WTC11 (cell line): ENCODE measurements at regions of chr21 and their contacts with region 1.

Region 1: GRCh38 chr21:31088315-31088714 is 50.0 kb upstream of the KRTAP19-8 start:
- DNase-seq: peak; percentile 48
- ATAC-seq: peak; percentile 39; the same call in 1 of the 2 replicates
- H3K4me3 Mint-ChIP-seq: no peak overlapping the region
- H3K27ac Mint-ChIP-seq: no peak overlapping the region
- H3K4me1 Mint-ChIP-seq: peaks cover 6% of the 10 kb centered on the region
- H3K27me3 Mint-ChIP-seq: no peaks in the 10 kb centered on the region
- CTCF ChIP-seq: peak; percentile 32; the same call in 1 of the 2 replicates

Region 2: GRCh38 chr21:30831194-30831765 is 257.0 kb before region 1 on chr21:
- CTCF ChIA-PET with region 1: interaction called, 14 read pairs
- POLR2A ChIA-PET with region 1: no interaction called
- DNase-seq: peak; percentile 72
- ATAC-seq: peak; percentile 81
- H3K4me3 Mint-ChIP-seq: no peak overlapping the region
- H3K27ac Mint-ChIP-seq: no peak overlapping the region
- H3K4me1 Mint-ChIP-seq: no peaks in the 10 kb centered on the region
- H3K27me3 Mint-ChIP-seq: no peaks in the 10 kb centered on the region
- CTCF ChIP-seq: peak; percentile 86

Region 3: GRCh38 chr21:30839304-30839703 is 249.0 kb before region 1 on chr21:
- CTCF ChIA-PET with region 1: interaction called, 22 read pairs
- POLR2A ChIA-PET with region 1: no interaction called
- DNase-seq: peak; percentile 73
- ATAC-seq: peak; percentile 98
- H3K4me3 Mint-ChIP-seq: no peak overlapping the region
- H3K27ac Mint-ChIP-seq: no peak overlapping the region
- H3K4me1 Mint-ChIP-seq: no peaks in the 10 kb centered on the region
- H3K27me3 Mint-ChIP-seq: no peaks in the 10 kb centered on the region
- CTCF ChIP-seq: peak; percentile 44; the same call in 1 of the 2 replicates

Region 4: DNA sequence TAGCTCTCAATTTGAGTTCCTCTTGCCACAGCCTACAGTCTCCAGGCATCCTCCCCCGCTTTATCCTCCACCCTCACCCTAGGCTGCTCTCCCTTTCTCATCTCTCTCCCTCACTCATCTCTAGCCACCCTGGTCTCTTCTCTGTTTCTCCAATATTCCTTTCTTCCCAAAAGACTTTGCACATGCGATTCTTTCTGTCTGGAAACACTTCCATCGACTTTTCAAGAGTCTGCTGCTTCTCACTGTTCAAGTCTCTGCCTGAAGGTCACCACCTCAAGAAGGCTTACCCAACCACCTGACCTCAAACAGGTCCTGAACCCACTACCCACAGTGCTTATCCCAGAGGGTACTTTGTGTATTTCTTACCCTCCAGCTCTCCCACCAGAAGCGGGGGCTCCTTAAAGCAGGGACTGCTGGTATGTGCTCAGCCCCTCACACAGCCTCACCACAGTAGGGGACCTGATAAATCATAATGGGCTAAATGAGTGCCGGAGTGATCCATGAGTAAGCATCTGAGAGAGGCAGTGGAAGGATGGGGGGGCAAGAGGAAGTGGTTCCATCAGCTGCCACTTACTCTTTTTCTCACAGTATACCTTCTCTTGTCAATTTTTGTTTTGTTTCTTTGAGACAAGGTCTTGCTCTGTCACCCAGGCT is 35.7 kb before region 1 on chr21:
- CTCF ChIA-PET with region 1: no interaction called
- POLR2A ChIA-PET with region 1: no interaction called
- DNase-seq: no peak
- ATAC-seq: peak; percentile 86
- H3K4me3 Mint-ChIP-seq: no peak overlapping the region
- H3K27ac Mint-ChIP-seq: no peak overlapping the region
- H3K4me1 Mint-ChIP-seq: peaks cover 9% of the 10 kb centered on the region
- H3K27me3 Mint-ChIP-seq: no peaks in the 10 kb centered on the region
- CTCF ChIP-seq: no peak